Dorsolateral prefrontal cortex (tissue), 120 donors: ENCODE measurements at regions of chr9 and their contacts with region 1.

Region 1: GRCh38 chr9:38662763-38663593 is 42.6 kb upstream of the ANKRD18A start:
- DNase-seq: peak in 7 of 10 donors; percentile 42 to 74 (median 69)
- H3K4me3 ChIP-seq: peak overlapping the region in 8 of 59 donors; percentile 3 to 36 (median 17)
- H3K27ac ChIP-seq: peak overlapping the region in 50 of 59 donors; percentile 1 to 98 (median 66)
- H3K27me3 ChIP-seq: no peaks in the 10 kb centered on the region
- CTCF ChIP-seq: peak in 55 of 56 donors; percentile 13 to 83 (median 54)

Region 2: GRCh38 chr9:38507587-38507986 is 155.4 kb before region 1 on chr9:
- intact Hi-C with region 1: no loop called
- DNase-seq: no peak
- H3K4me3 ChIP-seq: no peak overlapping the region
- H3K27ac ChIP-seq: no peak overlapping the region
- H3K27me3 ChIP-seq: peaks cover 0 to 3% (median 0%) of the 10 kb centered on the region in 45 donors
- CTCF ChIP-seq: no peak

Region 3: DNA sequence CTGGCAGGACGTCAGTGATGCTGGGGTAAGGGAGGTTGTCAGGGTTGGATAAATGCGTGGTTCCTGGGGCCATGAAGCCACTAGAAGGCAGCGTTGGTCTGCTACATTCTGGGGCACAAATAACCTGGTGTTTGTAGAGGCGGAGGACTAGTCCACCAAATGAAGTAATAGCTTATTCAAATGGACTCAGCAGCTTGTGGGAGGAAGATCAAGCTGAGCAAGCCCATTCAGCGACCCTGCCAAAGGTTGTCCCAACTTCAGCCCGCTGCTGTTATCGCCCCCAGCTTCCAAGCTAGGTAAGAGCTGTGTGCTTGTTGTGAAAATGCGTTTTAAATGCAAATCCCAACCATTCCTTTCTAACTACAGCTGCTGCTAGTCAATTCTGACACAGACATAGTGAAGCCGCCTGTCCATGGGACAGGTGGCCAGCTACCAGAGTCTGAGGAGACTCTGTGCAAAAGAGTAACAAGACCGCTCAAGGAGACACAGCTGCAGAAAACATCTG is 64.6 kb after region 1 on chr9:
- intact Hi-C with region 1: loop called in 1 of 2 experiments (anchors 10 kb)
- DNase-seq: no peak
- H3K4me3 ChIP-seq: no peak overlapping the region
- H3K27ac ChIP-seq: no peak overlapping the region
- H3K27me3 ChIP-seq: peaks cover 0 to 7% (median 0%) of the 10 kb centered on the region in 45 donors
- CTCF ChIP-seq: peak in 17 of 56 donors; percentile 10 to 43 (median 17)